ENCODE measurements at regions of chr7 and their contacts with region 1.

Region 1: DNA sequence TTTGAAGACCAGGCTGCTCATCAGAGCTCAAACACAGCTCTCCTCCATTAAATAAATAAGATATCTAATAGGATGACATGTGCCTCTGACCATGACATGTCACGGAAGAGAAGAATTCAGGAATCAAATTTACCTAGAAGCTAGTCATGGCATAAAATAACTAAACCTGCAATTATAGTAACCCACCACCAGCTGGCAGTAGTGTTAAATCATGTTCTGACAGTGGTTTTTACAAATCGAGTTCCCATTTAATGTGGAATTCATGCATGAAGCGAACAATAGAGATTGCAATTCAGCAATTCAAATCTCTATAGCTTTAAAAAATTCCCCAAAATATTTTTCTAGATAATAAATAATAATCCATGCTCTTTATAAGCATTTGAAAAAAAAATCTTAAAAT is 74.6 kb upstream of the IKZF1 start:
- DNase-seq: peak in 2 of 9 experiments; percentile 44 to 60
- ATAC-seq: no peak
- H3K4me3 ChIP-seq: no peak overlapping the region
- H3K4me3 Mint-ChIP-seq: no peak overlapping the region
- H3K27ac ChIP-seq: no peak overlapping the region
- H3K27ac Mint-ChIP-seq: no peak overlapping the region
- H3K4me1 ChIP-seq: peaks cover 28% of the 10 kb centered on the region
- H3K4me1 Mint-ChIP-seq: peaks cover 39% of the 10 kb centered on the region
- H3K27me3 ChIP-seq: no peaks in the 10 kb centered on the region
- H3K27me3 Mint-ChIP-seq: no peaks in the 10 kb centered on the region
- CTCF ChIP-seq: peak; percentile 37

Region 2: GRCh38 chr7:50119815-50120637 is 109.9 kb before region 1 on chr7:
- CTCF ChIA-PET with region 1: no interaction called
- POLR2A ChIA-PET with region 1: no interaction called
- intact Hi-C with region 1: no loop called
- DNase-seq: peak in 7 of 9 experiments; percentile 7 to 47 (median 28)
- ATAC-seq: peak; percentile 46
- H3K4me3 ChIP-seq: no peak overlapping the region
- H3K4me3 Mint-ChIP-seq: no peak overlapping the region
- H3K27ac ChIP-seq: no peak overlapping the region
- H3K27ac Mint-ChIP-seq: no peak overlapping the region
- H3K4me1 ChIP-seq: no peaks in the 10 kb centered on the region
- H3K4me1 Mint-ChIP-seq: no peaks in the 10 kb centered on the region
- H3K27me3 ChIP-seq: no peaks in the 10 kb centered on the region
- H3K27me3 Mint-ChIP-seq: no peaks in the 10 kb centered on the region
- CTCF ChIP-seq: peak; percentile 21

Region 3: DNA sequence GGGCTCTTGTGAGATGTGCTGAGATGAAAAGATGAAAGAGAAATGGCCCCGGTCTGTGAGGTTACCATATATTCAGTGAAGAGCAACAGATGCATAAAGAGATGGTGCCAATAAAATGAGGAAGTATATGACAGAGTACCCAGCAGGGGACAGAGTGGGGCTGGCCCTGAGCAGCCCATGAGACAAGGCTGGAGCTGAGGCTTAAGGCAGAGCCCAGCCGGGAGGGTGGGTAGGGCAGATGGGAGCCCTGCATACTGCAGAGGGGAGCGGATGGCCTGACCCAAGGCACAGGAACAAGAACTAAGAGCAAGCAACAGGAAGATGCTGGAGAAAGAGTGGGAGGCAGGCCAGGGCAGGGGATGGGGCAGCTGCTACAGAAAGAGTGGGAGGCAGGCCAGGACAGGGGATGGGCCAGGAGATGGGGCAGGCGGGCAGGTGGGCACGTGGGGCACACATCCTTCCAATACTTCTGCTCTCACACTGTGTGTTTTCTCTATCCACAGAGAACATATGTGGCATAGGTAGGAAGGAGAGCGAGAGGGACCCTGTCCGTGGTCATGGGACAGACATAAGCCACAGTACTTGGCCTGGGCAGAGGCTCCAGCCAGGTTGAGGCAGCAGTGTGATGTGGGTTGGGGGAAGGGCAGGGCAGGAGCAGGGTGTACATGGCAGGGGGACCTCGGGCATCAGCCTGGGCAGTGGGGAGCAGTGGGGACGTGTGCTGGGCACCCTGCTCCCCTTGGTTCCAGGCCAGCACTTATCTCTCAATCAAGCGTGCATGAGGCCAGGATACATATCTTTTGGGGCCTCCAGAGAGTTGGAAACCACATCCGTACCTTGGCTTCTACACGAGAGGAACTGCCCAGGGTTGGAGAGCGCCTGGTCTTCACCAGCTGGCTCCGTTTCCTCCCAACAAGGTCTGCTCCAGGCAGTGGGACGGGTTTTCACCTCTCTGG is 17.0 kb before region 1 on chr7:
- CTCF ChIA-PET with region 1: interaction called, 8 read pairs
- POLR2A ChIA-PET with region 1: interaction called, 3 read pairs
- intact Hi-C with region 1: loop called in 1 of 2 experiments (anchors 2 kb)
- DNase-seq: peak in 1 of 9 experiments; percentile 49
- ATAC-seq: peak; percentile 31
- H3K4me3 ChIP-seq: no peak overlapping the region
- H3K4me3 Mint-ChIP-seq: peak overlapping the region; percentile 27
- H3K27ac ChIP-seq: no peak overlapping the region
- H3K27ac Mint-ChIP-seq: peak overlapping the region; percentile 70
- H3K4me1 ChIP-seq: peaks cover 95% of the 10 kb centered on the region
- H3K4me1 Mint-ChIP-seq: peaks cover 97% of the 10 kb centered on the region
- H3K27me3 ChIP-seq: no peaks in the 10 kb centered on the region
- H3K27me3 Mint-ChIP-seq: no peaks in the 10 kb centered on the region
- CTCF ChIP-seq: no peak